Pancreas (tissue), 10 donors: ENCODE measurements at regions of chr15 and their contacts with region 1.

Region 1: GRCh38 chr15:36883713-36884517 is 216.4 kb downstream of the MEIS2 start:
- DNase-seq: peak; percentile 77 to 96 (median 86)
- ATAC-seq: peak; percentile 87 to 92 (median 89)
- H3K4me3 ChIP-seq: peak overlapping the region in 1 of 4 donors; percentile 17
- H3K27ac ChIP-seq: no peak overlapping the region
- H3K4me1 ChIP-seq: peaks cover 0 to 3% (median 0%) of the 10 kb centered on the region in 3 donors
- H3K27me3 ChIP-seq: peaks cover 0 to 35% (median 8%) of the 10 kb centered on the region in 4 donors
- CTCF ChIP-seq: peak; percentile 65 to 85 (median 82)

Region 2: GRCh38 chr15:36591536-36592411 is 292.1 kb before region 1 on chr15:
- intact Hi-C with region 1: no loop called
- DNase-seq: no peak
- ATAC-seq: no peak
- H3K4me3 ChIP-seq: no peak overlapping the region
- H3K27ac ChIP-seq: no peak overlapping the region
- H3K4me1 ChIP-seq: no peaks in the 10 kb centered on the region
- H3K27me3 ChIP-seq: no peaks in the 10 kb centered on the region
- CTCF ChIP-seq: no peak

Region 3: GRCh38 chr15:37100109-37100965 is 216.4 kb after region 1 on chr15 and contains the start of gene MEIS2:
- intact Hi-C with region 1: loop called in 1 of 3 experiments (anchors 10 kb)
- DNase-seq: peak; percentile 89 to 96 (median 90)
- ATAC-seq: peak; percentile 69 to 75 (median 72)
- H3K4me3 ChIP-seq: peak within 1 kb of the TSS; percentile 45 to 71 (median 68)
- H3K27ac ChIP-seq: peak within 1 kb of the TSS; percentile 80 to 98 (median 88)
- H3K4me1 ChIP-seq: no peaks in the 10 kb centered on the region
- H3K27me3 ChIP-seq: no peaks in the 10 kb centered on the region
- CTCF ChIP-seq: no peak
- total RNA-seq, gene MEIS2: 9.1 to 24.1 (median 14.8) TPM

Region 4: DNA sequence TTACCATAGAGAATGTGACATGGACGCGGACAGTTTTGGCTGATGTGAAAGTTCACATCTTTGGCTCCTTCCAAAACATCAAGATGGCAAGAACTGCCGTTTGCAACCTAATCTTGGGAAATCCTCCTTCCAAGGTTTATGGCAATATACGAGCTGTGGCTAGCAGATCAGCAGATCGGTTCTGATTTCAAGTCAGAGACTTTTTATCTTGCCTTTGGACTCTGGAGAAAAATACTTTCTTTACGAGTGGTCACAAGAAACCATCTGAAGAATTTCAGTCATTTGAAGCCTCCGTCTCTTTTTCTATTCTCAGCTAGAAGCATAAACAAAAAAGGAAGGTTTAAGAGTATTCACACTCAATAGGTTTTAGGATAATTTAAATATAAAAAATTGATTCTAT is 370.0 kb after region 1 on chr15:
- intact Hi-C with region 1: no loop called
- DNase-seq: no peak
- ATAC-seq: no peak
- H3K4me3 ChIP-seq: no peak overlapping the region
- H3K27ac ChIP-seq: no peak overlapping the region
- H3K4me1 ChIP-seq: no peaks in the 10 kb centered on the region
- H3K27me3 ChIP-seq: no peaks in the 10 kb centered on the region
- CTCF ChIP-seq: no peak

Region 5: GRCh38 chr15:37298271-37298670 is 414.4 kb after region 1 on chr15:
- intact Hi-C with region 1: no loop called
- DNase-seq: no peak
- ATAC-seq: no peak
- H3K4me3 ChIP-seq: no peak overlapping the region
- H3K27ac ChIP-seq: no peak overlapping the region
- H3K4me1 ChIP-seq: no peaks in the 10 kb centered on the region
- H3K27me3 ChIP-seq: no peaks in the 10 kb centered on the region
- CTCF ChIP-seq: no peak

Region 6: DNA sequence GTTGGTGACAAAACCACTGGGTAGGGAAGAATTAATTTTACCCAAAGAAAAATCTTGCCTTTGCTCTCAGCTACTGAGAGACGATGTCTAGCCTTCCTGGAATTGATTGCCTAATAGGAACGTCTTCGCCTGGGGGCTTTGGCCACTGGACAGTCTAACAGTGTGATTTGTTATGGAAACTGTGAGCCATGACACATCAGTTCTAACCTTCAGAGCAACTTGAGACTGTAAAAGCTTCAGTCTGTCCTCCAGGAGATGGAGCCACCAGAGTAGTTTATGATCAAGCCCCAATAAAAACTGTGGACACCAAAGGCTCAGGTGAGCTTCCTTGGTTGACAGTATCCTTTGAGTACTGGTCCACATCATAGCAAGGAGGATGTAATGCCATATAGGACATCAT is 814.8 kb after region 1 on chr15:
- intact Hi-C with region 1: no loop called
- DNase-seq: no peak
- ATAC-seq: no peak
- H3K4me3 ChIP-seq: no peak overlapping the region
- H3K27ac ChIP-seq: no peak overlapping the region
- H3K4me1 ChIP-seq: no peaks in the 10 kb centered on the region
- H3K27me3 ChIP-seq: no peaks in the 10 kb centered on the region
- CTCF ChIP-seq: no peak